ENCODE measurements at regions of chr5 and their contacts with region 1.

Region 1: GRCh38 chr5:171771856-171772255 is 13.8 kb upstream of the SMIM23 start:
- DNase-seq: no peak
- H3K4me3 ChIP-seq: no peak overlapping the region
- H3K27ac ChIP-seq: no peak overlapping the region
- H3K4me1 ChIP-seq: no peaks in the 10 kb centered on the region
- H3K27me3 ChIP-seq: no peaks in the 10 kb centered on the region
- CTCF ChIP-seq: no peak
- POLR2A ChIP-seq: no peak

Region 2: DNA sequence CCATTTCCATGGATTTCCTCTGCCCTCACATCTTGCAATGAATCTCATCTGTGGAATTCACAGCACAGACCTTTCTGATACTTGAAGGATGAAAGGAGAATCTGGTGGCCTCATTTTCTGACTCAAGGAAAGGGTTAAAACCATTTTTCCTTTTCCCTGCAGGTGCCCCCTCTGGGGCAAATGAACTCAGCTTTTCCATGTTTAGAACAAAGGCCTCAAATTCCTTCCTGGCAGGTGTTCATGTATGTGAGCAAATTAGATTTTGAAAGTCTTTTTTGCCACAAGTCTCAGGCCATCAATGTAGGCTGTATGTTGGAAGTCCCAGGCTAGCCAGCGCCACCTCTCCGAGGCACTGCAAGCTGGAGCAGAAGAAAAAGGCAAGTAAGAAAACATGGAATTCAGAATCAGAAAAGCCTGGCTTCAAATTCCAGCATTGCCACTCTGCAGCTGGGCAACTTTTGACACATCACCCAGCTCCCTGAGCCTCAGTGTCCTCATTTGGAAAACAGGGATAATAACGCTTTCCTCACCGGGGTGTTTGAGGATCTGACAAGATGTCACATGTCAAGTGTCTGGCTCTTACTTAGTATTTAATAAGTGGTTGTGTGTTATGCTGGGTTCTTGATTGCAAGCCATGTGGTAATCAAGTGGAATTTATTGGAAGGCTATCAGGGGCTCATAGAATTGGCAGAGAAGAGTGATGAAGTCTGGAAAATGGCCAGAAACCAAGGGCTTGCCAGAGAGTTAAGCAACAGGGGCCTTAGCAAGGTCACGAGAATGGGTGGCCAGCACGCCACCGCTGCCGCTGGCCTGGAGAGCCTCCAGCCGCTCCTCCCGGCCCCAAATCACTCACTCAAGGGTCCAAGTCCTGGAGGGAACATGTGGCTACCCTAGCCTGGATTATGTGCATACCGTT is 34.6 kb before region 1 on chr5:
- intact Hi-C with region 1: loop called (anchors 2 kb)
- DNase-seq: no peak
- H3K4me3 ChIP-seq: no peak overlapping the region
- H3K27ac ChIP-seq: no peak overlapping the region
- H3K4me1 ChIP-seq: peaks cover 9% of the 10 kb centered on the region
- H3K27me3 ChIP-seq: no peaks in the 10 kb centered on the region
- CTCF ChIP-seq: no peak
- POLR2A ChIP-seq: no peak